HEK293 (cell line): ENCODE measurements at regions of chr19 and their contacts with region 1.

Region 1: GRCh38 chr19:5719961-5720790 is at the starts of genes CATSPERD and LONP1:
- H3K4me3 ChIP-seq: peak within 1 kb of the TSS; percentile 68
- H3K27ac ChIP-seq: peak within 1 kb of the TSS; percentile 80
- H3K4me1 ChIP-seq: peaks cover 12% of the 10 kb centered on the region; the same call in 1 of the 2 replicates
- CTCF ChIP-seq: peak; percentile 99

Region 2: GRCh38 chr19:5695288-5696195 is 24.6 kb before region 1 on chr19:
- CTCF ChIA-PET with region 1: interaction called, 3 read pairs
- POLR2A ChIA-PET with region 1: interaction called, 62 read pairs
- H3K4me3 ChIP-seq: no peak overlapping the region
- H3K27ac ChIP-seq: peak overlapping the region; percentile 50
- H3K4me1 ChIP-seq: no peaks in the 10 kb centered on the region; the same call in 1 of the 2 replicates
- CTCF ChIP-seq: no peak

Region 3: GRCh38 chr19:5707576-5708575 is 12.3 kb before region 1 on chr19:
- CTCF ChIA-PET with region 1: interaction called, 6 read pairs
- POLR2A ChIA-PET with region 1: interaction called, 11 read pairs
- H3K4me3 ChIP-seq: no peak overlapping the region
- H3K27ac ChIP-seq: no peak overlapping the region
- H3K4me1 ChIP-seq: no peaks in the 10 kb centered on the region
- CTCF ChIP-seq: no peak

Region 4: DNA sequence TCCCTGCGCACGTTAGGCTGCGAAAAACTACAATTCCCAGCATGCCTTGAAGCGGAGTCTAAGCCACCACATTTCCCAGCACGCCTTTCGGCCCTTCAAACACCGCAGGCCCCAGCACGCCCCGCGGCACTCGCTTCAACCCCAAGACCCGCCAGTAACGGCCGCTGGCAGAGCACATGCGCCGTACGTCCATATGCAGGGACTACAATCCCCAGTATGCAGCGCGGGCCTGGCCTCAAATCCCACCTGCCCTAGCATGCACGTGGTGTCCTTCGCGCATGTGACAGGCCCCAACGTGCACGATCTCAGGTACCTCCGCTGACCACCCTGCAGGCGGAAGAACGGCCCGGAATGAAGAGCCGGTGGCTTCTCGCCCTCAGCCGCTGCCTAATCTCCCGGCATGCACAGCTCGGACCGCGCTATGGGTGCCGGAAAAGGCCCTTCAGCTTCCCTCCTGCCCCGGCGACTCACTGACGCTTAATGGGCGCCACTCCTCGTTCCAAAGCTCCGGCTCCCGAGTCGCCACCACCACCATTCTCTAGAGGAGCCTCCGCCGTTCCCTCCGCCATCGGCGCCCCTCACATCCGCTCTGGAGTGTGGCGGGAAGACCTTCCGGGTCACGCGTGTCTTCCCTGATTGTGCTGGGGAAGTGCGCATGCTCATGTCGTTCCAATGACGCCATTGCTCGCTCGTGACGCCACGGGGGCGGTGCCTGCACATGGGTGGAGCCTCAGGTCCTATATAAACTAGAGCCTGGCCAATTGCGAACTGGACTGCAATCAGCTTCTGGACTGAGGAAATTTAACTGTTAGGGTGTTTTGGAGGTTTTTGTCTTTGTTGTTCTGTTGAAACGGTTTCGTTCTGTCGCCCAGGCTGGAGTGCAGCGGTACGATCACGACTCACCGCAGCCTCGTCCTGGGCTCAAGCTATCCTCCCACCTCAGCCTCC is 70.7 kb after region 1 on chr19 and contains the start of gene DUS3L:
- CTCF ChIA-PET with region 1: interaction called, 6 read pairs
- POLR2A ChIA-PET with region 1: interaction called, 18 read pairs
- H3K4me3 ChIP-seq: peak within 1 kb of the TSS; percentile 71
- H3K27ac ChIP-seq: peak within 1 kb of the TSS; percentile 82
- H3K4me1 ChIP-seq: no peaks in the 10 kb centered on the region
- CTCF ChIP-seq: peak; percentile 23

Region 5: DNA sequence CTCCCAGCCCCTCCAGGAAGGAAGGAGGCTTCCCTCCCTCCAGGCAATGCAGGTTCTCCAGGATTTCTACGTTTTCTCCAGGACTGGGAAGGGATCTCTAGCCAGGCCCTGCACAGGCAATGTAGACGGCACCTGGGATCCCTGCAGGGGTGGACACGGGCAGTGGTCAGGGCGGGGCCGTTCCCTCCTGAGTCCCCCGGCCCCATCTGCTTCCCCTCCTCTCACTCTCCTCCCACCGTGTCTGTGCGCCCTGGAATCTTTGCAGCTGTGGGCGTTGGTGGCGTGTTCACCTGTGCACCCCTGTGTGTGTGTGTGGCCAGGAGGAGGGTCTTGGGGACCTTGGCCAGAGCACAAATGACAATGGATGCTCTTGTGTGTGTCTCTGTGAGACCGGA is 94.7 kb after region 1 on chr19:
- CTCF ChIA-PET with region 1: no interaction called
- POLR2A ChIA-PET with region 1: no interaction called
- H3K4me3 ChIP-seq: no peak overlapping the region
- H3K27ac ChIP-seq: no peak overlapping the region
- H3K4me1 ChIP-seq: no peaks in the 10 kb centered on the region
- CTCF ChIP-seq: no peak